Heart right ventricle (tissue), 16 donors: ENCODE measurements at regions of chrX and their contacts with region 1.

Region 1: DNA sequence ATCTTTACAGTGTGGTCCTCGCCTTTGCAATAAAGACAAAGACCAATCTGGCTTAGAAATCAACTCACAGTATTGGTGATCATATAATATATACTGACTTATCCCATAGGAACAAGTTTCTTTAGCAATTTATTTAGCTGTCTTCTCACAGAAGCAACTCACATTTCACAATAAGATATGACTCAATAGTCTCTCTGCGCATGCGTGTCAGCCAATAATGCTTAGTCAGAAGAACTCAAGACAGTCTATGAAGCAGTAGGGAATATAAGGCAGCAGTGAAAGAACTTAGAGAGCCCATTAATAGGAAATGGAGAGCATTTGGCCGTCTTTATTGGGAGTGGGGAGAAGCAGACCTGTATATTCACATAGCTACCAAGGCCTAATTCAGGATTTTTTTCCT is 216.7 kb downstream of the IL13RA2 start:
- DNase-seq: no peak
- ATAC-seq: no peak
- H3K4me3 ChIP-seq: no peak overlapping the region
- H3K27ac ChIP-seq: no peak overlapping the region
- H3K4me1 ChIP-seq: no peaks in the 10 kb centered on the region
- H3K27me3 ChIP-seq: peaks cover 0 to 5% (median 0%) of the 10 kb centered on the region in 7 donors
- CTCF ChIP-seq: no peak

Region 2: GRCh38 chrX:114774691-114775090 is 26.0 kb before region 1 on chrX:
- intact Hi-C with region 1: loop called in 1 of 10 experiments (anchors 1 kb)
- DNase-seq: no peak
- ATAC-seq: no peak
- H3K4me3 ChIP-seq: no peak overlapping the region
- H3K27ac ChIP-seq: no peak overlapping the region
- H3K4me1 ChIP-seq: no peaks in the 10 kb centered on the region
- H3K27me3 ChIP-seq: peaks cover 0 to 5% (median 0%) of the 10 kb centered on the region in 7 donors
- CTCF ChIP-seq: peak in 4 of 9 donors; percentile 9 to 20 (median 16)